Dorsolateral prefrontal cortex (tissue), 120 donors: ENCODE measurements at regions of chr1 and their contacts with region 1.

Region 1: DNA sequence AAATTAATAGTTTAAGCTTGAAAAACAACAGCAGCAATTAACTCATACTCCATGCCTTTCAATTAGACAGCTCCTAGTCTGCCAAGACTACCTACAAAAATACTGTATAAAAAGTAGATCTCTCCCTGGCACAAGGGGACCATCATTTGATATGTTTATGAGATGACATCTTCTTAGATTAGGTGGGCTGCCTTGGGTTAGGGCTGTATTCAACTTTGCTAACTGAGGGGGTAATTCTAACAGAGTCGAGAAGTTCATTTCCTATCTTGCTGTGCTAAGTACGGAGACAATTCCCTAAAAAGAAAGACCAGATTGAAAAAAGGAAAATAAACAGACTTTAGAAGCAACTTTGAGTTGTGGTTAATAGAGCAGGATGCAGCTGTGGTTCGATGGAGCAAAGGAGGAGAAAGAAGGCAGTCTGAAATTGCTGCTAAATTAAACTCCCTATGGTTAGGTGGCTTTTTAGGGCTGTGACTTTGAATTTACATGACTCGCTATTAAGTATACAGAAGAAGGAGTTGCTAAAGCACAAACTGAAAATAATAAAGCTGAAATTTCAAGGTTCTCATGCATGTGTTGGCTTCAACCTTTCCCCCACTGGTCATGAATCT is 75.4 kb downstream of the CDC7 start:
- DNase-seq: no peak
- H3K4me3 ChIP-seq: no peak overlapping the region
- H3K27ac ChIP-seq: no peak overlapping the region
- H3K27me3 ChIP-seq: peaks cover 0 to 11% (median 0%) of the 10 kb centered on the region in 45 donors
- CTCF ChIP-seq: no peak

Region 2: DNA sequence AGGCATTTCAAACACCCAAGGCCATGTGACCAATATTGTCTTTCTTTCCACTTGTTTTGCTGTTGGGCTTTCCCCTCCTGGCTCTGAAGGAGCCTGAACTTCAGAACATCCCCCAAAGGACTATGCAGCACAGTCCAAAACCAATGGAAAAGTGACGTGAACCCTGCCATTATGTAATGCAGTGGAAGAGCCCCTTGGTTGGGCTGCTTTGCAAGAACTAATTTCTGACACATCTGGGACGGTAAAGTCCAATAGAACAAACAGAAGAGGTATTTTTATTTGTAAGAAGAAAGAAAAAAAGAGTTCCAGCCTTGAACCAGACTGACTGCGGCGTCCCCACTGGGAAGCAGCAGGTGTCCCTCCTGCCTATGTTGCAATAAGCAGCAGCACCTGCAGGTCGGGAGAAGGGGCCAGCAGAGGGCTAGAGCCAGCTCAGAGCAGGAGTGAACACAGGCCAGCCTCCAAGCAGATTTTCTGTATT is 41.3 kb after region 1 on chr1:
- intact Hi-C with region 1: loop called in 1 of 2 experiments (anchors 2 kb)
- DNase-seq: peak in 1 of 10 donors; percentile 69
- H3K4me3 ChIP-seq: no peak overlapping the region
- H3K27ac ChIP-seq: no peak overlapping the region
- H3K27me3 ChIP-seq: peaks cover 0 to 18% (median 0%) of the 10 kb centered on the region in 45 donors
- CTCF ChIP-seq: peak in 7 of 56 donors; percentile 9 to 20 (median 12)